ENCODE measurements at regions of chr3 and their contacts with region 1.

Region 1: DNA sequence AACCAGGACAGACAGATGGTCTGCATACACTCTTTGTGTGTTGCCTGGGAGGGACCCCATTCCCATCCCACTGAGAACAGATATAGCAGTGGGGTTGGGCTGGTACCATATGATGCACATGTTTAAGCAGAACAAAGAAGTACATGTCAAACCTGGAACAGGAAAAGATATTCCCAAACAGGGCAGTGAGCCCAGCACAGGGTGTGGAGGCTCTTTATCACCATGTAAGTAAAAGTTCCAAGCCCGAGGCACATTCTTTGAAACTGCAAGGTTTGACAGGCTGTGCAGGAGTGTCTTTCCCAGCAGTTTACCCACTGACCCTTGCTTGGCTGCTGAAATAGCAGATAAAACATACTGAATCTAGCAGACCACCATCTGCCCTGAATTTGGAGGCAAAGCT is 5.3 kb upstream of the ZNF445 start:
- DNase-seq: no peak
- ATAC-seq: no peak
- H3K4me3 ChIP-seq: no peak overlapping the region
- H3K27ac ChIP-seq: no peak overlapping the region
- H3K4me1 ChIP-seq: no peaks in the 10 kb centered on the region; the same call in 1 of the 2 replicates
- H3K27me3 ChIP-seq: no peaks in the 10 kb centered on the region
- CTCF ChIP-seq: no peak
- POLR2A ChIP-seq: no peak
- RAD21 ChIP-seq: no peak

Region 2: DNA sequence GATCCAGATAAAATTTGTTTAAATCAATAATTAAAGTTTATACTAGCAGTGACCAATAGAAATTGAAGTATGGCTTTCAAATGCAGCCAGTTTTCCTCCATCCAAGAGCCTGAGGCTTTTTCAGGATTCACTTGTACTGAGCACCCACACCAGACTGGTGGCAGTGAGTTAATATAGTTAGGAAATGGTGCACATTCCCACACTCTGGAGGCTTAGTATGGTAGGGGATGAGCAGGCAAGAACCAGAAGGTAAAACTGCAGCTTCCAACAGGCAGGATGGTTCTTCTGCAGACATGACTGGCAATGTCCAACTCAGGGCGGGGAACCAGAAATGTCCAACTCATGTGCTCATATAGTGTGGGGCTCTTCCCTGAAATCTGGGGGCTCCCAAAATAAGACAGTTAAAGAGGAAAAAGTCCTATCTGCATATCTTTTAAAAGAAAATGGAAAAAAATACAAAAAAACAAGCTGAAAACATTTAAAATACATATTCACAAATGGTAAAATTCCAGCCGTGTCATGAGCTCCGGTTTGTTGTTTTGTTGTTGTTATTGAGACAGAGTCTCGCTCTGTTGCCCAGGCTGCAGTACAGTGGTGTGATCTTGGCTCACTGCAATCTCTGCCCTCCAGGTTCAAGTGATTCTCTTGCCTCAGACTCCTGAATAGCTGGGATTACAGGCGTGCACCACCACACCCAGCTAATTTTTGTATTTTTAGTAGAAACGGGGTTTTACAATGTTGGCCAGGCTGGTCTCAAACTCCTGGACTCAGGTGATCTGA is 13.1 kb after region 1 on chr3:
- CTCF ChIA-PET with region 1: no interaction called
- POLR2A ChIA-PET with region 1: interaction called, 22 read pairs
- dilution Hi-C with region 1: no loop called
- in situ Hi-C with region 1: no loop called
- intact Hi-C with region 1: no loop called
- DNase-seq: no peak
- ATAC-seq: no peak
- H3K4me3 ChIP-seq: no peak overlapping the region
- H3K27ac ChIP-seq: no peak overlapping the region
- H3K4me1 ChIP-seq: no peaks in the 10 kb centered on the region
- H3K27me3 ChIP-seq: no peaks in the 10 kb centered on the region
- CTCF ChIP-seq: no peak
- POLR2A ChIP-seq: no peak
- RAD21 ChIP-seq: no peak

Measured in IMR-90 (cell line).